SK-N-SH (cell line): ENCODE measurements at regions of chr11 and their contacts with region 1.

Region 1: GRCh38 chr11:131748151-131749050 is 378.0 kb downstream of the NTM start:
- DNase-seq: peak; percentile 67
- H3K4me3 ChIP-seq: peak overlapping the region in 1 of 2 experiments; percentile 28; a peak in 2 of 4 replicates
- H3K27ac ChIP-seq: peak overlapping the region in 1 of 2 experiments; percentile 96; a peak in 2 of 4 replicates
- H3K4me1 ChIP-seq: peaks cover 0 to 39% of the 10 kb centered on the region in 2 experiments; a peak in 3 of 4 replicates
- H3K27me3 ChIP-seq: no peaks in the 10 kb centered on the region
- CTCF ChIP-seq: peak; percentile 94
- EP300 ChIP-seq: 0 out of 4 replicates have a peak, but pooled peaks of 1 of the 2 experiments have one; percentile 5
- RAD21 ChIP-seq: peak; percentile 85

Region 2: GRCh38 chr11:131694526-131695424 is 53.6 kb before region 1 on chr11:
- CTCF ChIA-PET with region 1: interaction called, 49 read pairs
- POLR2A ChIA-PET with region 1: no interaction called
- DNase-seq: peak; percentile 86
- H3K4me3 ChIP-seq: no peak overlapping the region; a peak in 1 of 4 replicates
- H3K27ac ChIP-seq: no peak overlapping the region
- H3K4me1 ChIP-seq: peaks cover 0 to 7% of the 10 kb centered on the region in 2 experiments; a peak in 1 of 4 replicates
- H3K27me3 ChIP-seq: no peaks in the 10 kb centered on the region
- CTCF ChIP-seq: peak; percentile 84
- EP300 ChIP-seq: no peak
- RAD21 ChIP-seq: peak; percentile 76

Region 3: GRCh38 chr11:131723088-131723487 is 25.3 kb before region 1 on chr11:
- CTCF ChIA-PET with region 1: interaction called, 13 read pairs
- POLR2A ChIA-PET with region 1: no interaction called
- DNase-seq: no peak
- H3K4me3 ChIP-seq: no peak overlapping the region
- H3K27ac ChIP-seq: no peak overlapping the region
- H3K4me1 ChIP-seq: no peaks in the 10 kb centered on the region
- H3K27me3 ChIP-seq: peaks cover 8% of the 10 kb centered on the region
- CTCF ChIP-seq: no peak
- EP300 ChIP-seq: no peak
- RAD21 ChIP-seq: no peak

Region 4: GRCh38 chr11:131760091-131761061 is 12.0 kb after region 1 on chr11:
- CTCF ChIA-PET with region 1: interaction called, 31 read pairs
- POLR2A ChIA-PET with region 1: no interaction called
- DNase-seq: no peak
- H3K4me3 ChIP-seq: no peak overlapping the region
- H3K27ac ChIP-seq: no peak overlapping the region
- H3K4me1 ChIP-seq: peaks cover 0 to 18% of the 10 kb centered on the region in 2 experiments; a peak in 2 of 4 replicates
- H3K27me3 ChIP-seq: no peaks in the 10 kb centered on the region
- CTCF ChIP-seq: no peak
- EP300 ChIP-seq: no peak
- RAD21 ChIP-seq: no peak

Region 5: DNA sequence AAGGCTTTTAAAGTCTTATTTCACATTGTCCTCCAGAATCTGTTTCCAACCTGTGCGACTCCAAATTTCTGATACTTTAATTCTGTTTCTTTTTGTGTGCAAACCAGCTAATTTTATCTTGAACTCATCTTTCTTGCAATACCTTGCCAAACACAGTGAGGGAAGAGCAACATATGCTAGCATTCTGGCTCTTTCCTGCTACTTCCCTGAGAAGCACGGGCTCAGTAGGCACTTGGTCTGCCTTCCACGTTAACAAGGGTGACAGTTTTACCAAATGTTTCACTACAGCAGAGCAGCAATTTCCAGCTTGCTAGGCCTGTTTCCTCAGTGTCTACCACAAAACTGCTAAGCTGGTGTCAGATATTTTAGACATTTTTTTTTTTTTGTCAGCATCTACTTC is 27.8 kb after region 1 on chr11:
- CTCF ChIA-PET with region 1: interaction called, 20 read pairs
- POLR2A ChIA-PET with region 1: no interaction called
- DNase-seq: no peak
- H3K4me3 ChIP-seq: no peak overlapping the region
- H3K27ac ChIP-seq: no peak overlapping the region
- H3K4me1 ChIP-seq: no peaks in the 10 kb centered on the region
- H3K27me3 ChIP-seq: no peaks in the 10 kb centered on the region
- CTCF ChIP-seq: no peak
- EP300 ChIP-seq: no peak
- RAD21 ChIP-seq: no peak

Region 6: GRCh38 chr11:131910523-131911387 is 162.4 kb after region 1 on chr11:
- CTCF ChIA-PET with region 1: interaction called, 18 read pairs
- POLR2A ChIA-PET with region 1: no interaction called
- DNase-seq: peak; percentile 73
- H3K4me3 ChIP-seq: peak overlapping the region; percentile 60 to 95
- H3K27ac ChIP-seq: peak overlapping the region in 1 of 2 experiments; percentile 80; a peak in 2 of 4 replicates
- H3K4me1 ChIP-seq: peaks cover 3 to 42% of the 10 kb centered on the region in 2 experiments; a peak in 2 of 4 replicates
- H3K27me3 ChIP-seq: no peaks in the 10 kb centered on the region
- CTCF ChIP-seq: no peak
- EP300 ChIP-seq: no peak
- RAD21 ChIP-seq: no peak

Region 7: GRCh38 chr11:132028380-132029240 is 280.2 kb after region 1 on chr11:
- CTCF ChIA-PET with region 1: interaction called, 24 read pairs
- POLR2A ChIA-PET with region 1: no interaction called
- DNase-seq: peak; percentile 46
- H3K4me3 ChIP-seq: no peak overlapping the region
- H3K27ac ChIP-seq: 0 out of 4 replicates have a peak overlapping the region, but pooled peaks of 1 of the 2 experiments have one; percentile 33
- H3K4me1 ChIP-seq: peaks cover 0 to 62% of the 10 kb centered on the region in 2 experiments; a peak in 2 of 4 replicates
- H3K27me3 ChIP-seq: no peaks in the 10 kb centered on the region
- CTCF ChIP-seq: peak; percentile 68
- EP300 ChIP-seq: no peak
- RAD21 ChIP-seq: peak; percentile 80